ENCODE measurements at regions of chr10 and their contacts with region 1.

Region 1: GRCh38 chr10:124092860-124093773 is at the start of gene CHST15:
- DNase-seq: peak; percentile 75 to 79
- ATAC-seq: peak; percentile 47 to 67
- H3K4me3 ChIP-seq: peak within 1 kb of the TSS; percentile 69
- H3K27ac ChIP-seq: peak within 1 kb of the TSS; percentile 73 to 92
- H3K4me1 ChIP-seq: peaks cover 9% of the 10 kb centered on the region
- CTCF ChIP-seq: peak; percentile 26; the same call in 1 of the 3 replicates
- EP300 ChIP-seq: no peak
- POLR2A ChIP-seq: peak; percentile 16; the same call in 1 of the 2 replicates
- RAD21 ChIP-seq: no peak; a peak in 2 of 5 replicates
- polyA plus RNA-seq, gene CHST15: 10.3 and 10.4 TPM in 2 replicates

Region 2: GRCh38 chr10:124152916-124153826 is 60.1 kb after region 1 on chr10:
- CTCF ChIA-PET with region 1: interaction called, 9 read pairs
- POLR2A ChIA-PET with region 1: interaction called, 30 read pairs
- DNase-seq: peak; percentile 89 to 97
- ATAC-seq: peak; percentile 83 to 90
- H3K4me3 ChIP-seq: peak overlapping the region; percentile 17; the same call in 2 of the 3 replicates
- H3K27ac ChIP-seq: peak overlapping the region; percentile 95 to 97
- H3K4me1 ChIP-seq: peaks cover 36% of the 10 kb centered on the region
- CTCF ChIP-seq: no peak
- EP300 ChIP-seq: peak in 1 of 2 experiments; percentile 54; a peak in 1 of 5 replicates
- POLR2A ChIP-seq: no peak; the same call in 1 of the 2 replicates
- RAD21 ChIP-seq: peak in 1 of 2 experiments; percentile 10; a peak in 1 of 5 replicates